ENCODE measurements at regions of chr9 and their contacts with region 1.

Region 1: GRCh38 chr9:20524776-20525175 is 97.5 kb downstream of the MLLT3 start:
- DNase-seq: no peak
- H3K4me3 ChIP-seq: no peak overlapping the region
- H3K27ac ChIP-seq: no peak overlapping the region
- H3K4me1 ChIP-seq: no peaks in the 10 kb centered on the region
- H3K27me3 ChIP-seq: no peaks in the 10 kb centered on the region
- CTCF ChIP-seq: peak; percentile 25 to 40

Region 2: DNA sequence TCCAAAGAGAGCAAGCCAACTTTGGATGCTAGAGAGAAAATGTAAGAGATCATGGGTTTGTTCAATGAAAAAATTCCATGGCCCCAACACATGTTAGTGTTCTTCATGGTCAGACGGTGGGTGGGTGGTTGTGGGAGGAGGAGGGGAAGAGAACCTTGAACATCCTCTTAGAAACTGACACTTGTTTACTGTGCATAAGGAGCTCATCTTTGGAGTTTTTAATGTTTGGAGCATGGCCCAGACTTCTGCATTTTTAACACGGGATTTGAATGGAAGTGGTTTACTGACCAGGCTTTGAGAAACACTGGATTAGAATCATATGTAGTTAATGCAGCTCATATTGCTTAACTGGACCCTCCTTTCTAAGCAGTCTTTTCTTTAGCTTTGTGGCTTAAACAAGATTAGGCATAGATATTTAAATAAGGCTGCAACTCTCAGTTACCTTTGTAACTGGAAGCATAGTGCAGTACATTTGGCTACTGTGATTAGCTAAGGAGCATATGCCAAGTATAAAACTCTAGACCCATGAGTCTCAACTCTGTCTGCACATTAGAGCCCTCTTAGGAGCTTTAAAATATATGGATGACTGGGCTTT is 219.4 kb after region 1 on chr9:
- CTCF ChIA-PET with region 1: interaction called, 20 read pairs
- dilution Hi-C with region 1: no loop called
- in situ Hi-C with region 1: no loop called
- intact Hi-C with region 1: no loop called
- DNase-seq: no peak
- H3K4me3 ChIP-seq: no peak overlapping the region
- H3K27ac ChIP-seq: no peak overlapping the region
- H3K4me1 ChIP-seq: no peaks in the 10 kb centered on the region
- H3K27me3 ChIP-seq: no peaks in the 10 kb centered on the region
- CTCF ChIP-seq: no peak

Region 3: DNA sequence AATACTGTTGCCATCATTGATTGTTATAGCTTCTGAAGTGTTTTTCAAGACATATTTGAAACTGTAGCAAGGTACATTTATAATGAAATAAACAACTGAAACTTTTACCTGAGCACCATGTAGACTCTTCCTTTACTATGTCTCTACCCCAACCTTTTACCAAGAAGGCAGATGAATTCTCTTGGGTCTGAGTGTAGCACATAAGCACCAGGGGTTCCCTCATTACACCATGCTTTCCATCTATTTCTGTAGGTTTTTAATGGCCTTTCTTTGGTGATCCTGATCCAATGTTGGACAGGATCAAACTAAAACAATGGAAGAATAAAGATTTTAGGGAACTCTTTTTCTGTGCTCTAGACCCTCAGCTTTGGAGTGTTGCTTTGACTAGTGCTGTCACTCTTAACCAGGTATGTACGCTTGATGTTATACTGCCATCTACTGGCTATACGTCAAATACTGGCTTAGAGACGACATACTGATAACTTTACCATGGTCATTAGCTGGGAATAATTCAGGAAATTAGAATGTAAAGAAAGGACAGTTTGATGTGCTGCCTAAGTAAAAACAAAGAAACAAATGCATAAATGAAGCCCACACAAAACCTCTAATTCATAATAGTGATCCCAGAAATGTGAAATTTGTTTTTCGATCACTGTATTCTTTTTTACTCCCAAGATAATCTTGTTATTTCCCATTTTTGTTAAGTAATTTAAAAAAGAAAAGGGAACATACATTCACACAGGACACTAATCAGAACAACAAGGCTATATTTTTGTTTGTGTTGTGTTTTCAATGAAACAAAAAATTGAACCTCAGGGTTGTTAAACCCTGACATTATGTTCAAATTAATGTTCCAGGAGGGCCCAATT is 586.2 kb after region 1 on chr9:
- CTCF ChIA-PET with region 1: no interaction called
- dilution Hi-C with region 1: no loop called
- in situ Hi-C with region 1: no loop called
- intact Hi-C with region 1: no loop called
- DNase-seq: peak; percentile 52
- H3K4me3 ChIP-seq: no peak overlapping the region
- H3K27ac ChIP-seq: no peak overlapping the region
- H3K4me1 ChIP-seq: no peaks in the 10 kb centered on the region
- H3K27me3 ChIP-seq: no peaks in the 10 kb centered on the region
- CTCF ChIP-seq: peak; percentile 76 to 85

Measured in mammary epithelial cell (primary cell).